Right ventricle myocardium inferior (tissue), 1 donor: ENCODE measurements at regions of chrX and their contacts with region 1.

Region 1: DNA sequence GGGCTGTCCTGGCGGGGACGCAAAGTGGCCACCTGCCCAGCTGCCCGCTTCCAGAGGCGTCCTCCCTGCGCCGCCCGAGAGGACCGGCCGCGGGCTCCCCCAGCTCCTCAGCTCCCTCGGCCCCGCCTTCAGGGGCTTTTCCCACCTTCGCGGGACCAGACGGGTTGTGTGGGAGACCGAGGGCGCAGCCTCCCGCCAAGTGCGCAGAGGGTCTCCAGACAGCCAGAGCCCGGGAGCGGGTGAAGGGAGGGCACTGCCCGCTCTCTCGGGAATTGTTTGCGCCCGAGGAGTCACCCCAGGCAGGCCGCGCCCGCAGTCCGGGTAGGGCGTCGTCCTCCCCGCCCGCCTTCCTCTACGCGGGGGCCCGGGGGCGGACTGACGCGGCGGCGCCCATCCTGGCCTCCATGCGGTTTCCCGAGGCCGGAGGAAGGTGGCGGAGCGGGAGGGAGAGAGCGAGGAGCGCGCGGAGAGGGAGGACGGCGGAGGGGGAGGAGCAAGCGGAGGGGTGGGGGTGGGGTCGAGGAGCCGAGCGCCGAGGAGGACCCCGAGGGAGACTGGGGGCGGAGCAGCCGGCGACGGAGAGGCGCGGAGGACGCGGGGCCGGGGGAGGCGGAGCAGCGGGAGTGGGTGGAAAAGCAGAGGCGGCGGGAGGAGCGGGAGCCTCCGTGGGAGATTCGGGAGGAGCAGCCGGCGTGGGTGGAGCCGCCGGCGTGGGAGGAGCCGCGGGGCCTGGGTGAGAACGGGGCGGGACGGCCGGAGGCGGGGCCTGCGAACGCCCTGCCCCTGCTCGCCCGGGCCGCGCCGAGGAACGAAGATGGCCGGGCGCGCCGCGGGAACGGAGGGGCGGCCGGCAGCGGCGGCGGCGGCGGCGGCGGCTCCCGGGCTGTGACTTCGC is 47.6 kb downstream of the CLDN34 start:
- DNase-seq: peak; percentile 94
- ATAC-seq: peak; percentile 95

Region 2: DNA sequence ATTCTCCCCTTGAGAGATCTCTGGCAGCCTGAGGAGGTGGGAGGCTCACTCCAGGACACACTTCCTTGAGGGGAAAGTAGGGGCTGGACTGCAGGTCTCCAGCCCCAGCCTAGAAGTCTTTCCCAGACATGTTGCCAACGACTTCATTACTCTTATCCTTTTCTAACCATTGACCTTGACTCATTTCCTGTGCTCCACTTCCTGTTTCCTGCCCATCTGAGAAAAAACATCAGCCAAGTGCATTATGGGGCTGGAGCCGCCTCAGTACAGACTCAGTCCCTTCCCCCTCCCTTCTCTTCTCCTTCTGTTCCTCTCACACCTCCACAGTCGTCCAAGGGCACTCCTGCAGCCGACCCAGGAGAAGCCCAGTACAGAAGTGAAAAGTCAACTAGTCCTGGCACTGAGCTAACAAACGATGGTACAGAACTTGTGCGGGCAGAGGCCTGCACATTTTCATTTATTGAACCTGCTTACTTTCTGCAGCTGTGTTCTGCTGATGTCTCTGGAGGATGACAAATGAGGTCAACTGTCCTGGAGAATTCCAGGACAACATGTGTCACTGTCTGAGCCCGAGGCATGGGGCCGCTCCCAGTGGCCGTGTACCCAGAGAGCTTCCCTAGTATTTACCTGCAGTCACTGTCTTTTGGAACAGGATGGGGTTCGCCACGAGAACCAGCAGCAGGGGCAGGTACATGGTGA is 269.1 kb before region 1 on chrX:
- intact Hi-C with region 1: no loop called
- DNase-seq: no peak
- ATAC-seq: no peak

Region 3: DNA sequence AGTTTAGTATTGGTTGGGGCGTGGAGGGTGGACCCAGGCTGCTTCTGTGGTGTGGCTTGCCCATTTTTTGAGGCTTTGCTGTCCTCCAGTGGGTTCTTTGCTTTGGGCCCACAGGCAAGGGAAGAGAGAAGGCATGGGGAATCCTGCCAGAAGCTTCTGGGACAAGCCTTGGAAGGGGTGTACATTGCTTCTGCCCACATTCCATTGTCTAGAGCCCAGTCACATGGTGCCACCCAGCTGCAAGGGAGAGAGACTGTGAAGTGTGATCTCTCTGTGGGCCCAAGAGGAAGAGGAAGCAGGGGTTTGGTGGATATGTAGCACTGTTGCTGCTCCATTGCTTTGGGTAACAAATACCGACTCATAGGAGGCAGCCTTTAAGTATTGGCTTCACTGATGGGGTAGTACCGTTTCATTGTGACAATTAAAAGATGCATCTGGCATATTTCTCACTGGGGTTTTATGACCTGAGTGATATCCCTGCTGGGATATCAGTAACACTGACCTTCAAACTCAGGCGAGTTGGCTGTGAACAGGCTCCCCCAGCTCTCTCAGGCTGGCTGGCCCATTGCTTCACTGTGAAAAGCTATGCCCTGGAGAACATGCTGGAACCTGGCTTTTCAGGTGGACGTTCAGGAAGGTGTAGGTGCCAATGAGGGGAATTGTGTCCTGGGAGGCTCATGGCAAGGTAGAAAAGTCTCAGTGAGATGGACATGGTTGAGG is 38.4 kb after region 1 on chrX:
- intact Hi-C with region 1: loop called (anchors 2 kb)
- DNase-seq: no peak
- ATAC-seq: peak; percentile 86

Region 4: GRCh38 chrX:10083809-10084208 is 69.1 kb after region 1 on chrX:
- intact Hi-C with region 1: loop called (anchors 1 kb)
- DNase-seq: no peak
- ATAC-seq: no peak

Region 5: GRCh38 chrX:10111364-10112148 is 96.8 kb after region 1 on chrX:
- intact Hi-C with region 1: loop called (anchors 5 kb)
- DNase-seq: no peak
- ATAC-seq: peak; percentile 38

Region 6: DNA sequence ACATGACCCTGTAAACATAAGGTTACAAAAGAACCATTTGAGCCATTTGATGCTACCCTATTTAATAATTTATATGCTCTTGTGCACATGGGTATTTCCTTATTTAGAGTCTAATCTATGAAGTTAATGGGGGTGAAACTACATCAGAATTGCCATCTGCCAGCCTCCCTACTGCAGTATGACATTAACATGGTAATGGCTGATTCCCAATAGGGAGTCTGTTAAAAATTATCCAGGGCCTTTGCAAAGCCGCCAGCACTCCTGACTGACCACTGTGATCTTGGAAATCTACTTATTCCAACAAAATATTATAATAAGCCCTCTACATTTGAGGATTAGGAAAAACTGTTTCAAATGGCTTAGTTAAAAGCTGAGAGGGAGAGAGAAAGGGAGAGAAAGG is 295.8 kb after region 1 on chrX:
- intact Hi-C with region 1: no loop called
- DNase-seq: no peak
- ATAC-seq: no peak